ENCODE measurements at regions of chr4 and their contacts with region 1.

Region 1: DNA sequence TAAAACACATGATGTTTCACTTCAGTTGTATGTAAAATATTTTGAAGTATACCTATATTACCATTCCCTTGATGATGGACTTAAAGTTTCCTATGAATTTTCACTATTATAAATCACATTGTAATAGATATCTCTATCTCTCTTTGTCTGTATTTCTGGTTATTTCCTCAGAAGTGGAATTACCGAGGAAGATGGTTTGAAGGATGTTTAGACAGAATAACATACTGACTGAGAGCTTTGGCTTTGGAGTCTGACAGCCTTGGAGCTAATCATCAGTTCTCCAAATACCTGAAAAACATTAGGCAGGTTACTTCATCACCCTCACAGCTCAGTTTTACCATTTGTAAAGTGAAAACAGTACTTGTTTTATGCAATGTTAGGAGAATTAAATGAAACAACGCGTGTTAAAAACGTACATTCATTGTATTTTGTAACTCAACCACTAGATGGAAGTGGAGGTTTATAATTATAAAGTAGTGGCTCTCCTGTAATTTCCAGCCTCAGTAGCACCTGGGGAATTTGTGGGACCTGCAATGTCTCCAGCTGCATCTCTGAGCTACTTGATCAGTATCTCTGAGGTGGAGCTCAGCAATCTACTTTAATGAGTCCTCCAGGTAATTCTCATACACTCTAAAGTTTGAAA is 14.3 kb downstream of the JCHAIN start:
- DNase-seq: peak; percentile 11 to 37 (median 27)
- H3K4me3 ChIP-seq: no peak overlapping the region
- H3K4me3 Mint-ChIP-seq: no peak overlapping the region
- H3K27ac ChIP-seq: no peak overlapping the region
- H3K27ac Mint-ChIP-seq: no peak overlapping the region
- H3K4me1 ChIP-seq: no peaks in the 10 kb centered on the region
- H3K4me1 Mint-ChIP-seq: peaks cover 7% of the 10 kb centered on the region
- H3K27me3 ChIP-seq: no peaks in the 10 kb centered on the region
- H3K27me3 Mint-ChIP-seq: peaks cover 0 to 4% (median 0%) of the 10 kb centered on the region in 3 donors
- CTCF ChIP-seq: peak; percentile 73

Region 2: DNA sequence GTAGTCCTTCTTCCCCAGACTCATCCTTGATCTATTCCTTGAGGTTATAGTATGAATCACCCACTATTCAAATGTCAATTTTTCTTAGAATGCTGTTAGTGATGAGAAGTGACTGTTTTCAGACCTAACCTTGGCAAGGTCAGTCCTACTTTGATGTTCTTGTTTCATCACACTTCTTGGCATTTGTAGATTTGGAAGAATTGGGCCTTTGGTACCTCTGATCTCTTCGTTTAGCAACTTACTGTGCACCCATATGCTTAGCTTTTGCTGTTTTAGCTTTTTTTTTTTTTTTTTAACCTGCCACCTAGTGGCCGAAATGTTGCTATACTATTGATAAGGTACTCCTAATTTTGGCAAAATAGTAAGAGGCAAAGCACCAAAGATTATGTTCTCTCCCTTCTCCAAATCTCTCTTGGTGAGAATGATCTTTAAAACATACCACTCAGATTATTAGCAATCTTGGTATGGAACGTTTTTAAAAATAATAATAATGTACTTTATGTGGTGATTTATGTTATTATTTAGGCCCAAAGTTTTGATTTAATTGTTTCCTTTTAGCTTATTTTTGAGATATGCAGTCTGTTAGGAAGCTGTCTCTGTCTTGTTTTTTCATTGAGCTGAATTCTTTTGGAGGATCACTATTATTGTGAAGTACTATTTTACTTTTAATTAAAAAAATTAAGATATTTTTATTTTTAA is 358.1 kb after region 1 on chr4:
- intact Hi-C with region 1: loop called in 1 of 2 experiments (anchors 10 kb)
- DNase-seq: peak; percentile 25 to 42 (median 29)
- H3K4me3 ChIP-seq: no peak overlapping the region
- H3K4me3 Mint-ChIP-seq: no peak overlapping the region
- H3K27ac ChIP-seq: peak overlapping the region in 1 of 2 donors; percentile 16
- H3K27ac Mint-ChIP-seq: peak overlapping the region in 2 of 7 donors; percentile 25 to 28
- H3K4me1 ChIP-seq: peaks cover 10% of the 10 kb centered on the region in 2 donors
- H3K4me1 Mint-ChIP-seq: peaks cover 10% of the 10 kb centered on the region
- H3K27me3 ChIP-seq: no peaks in the 10 kb centered on the region
- H3K27me3 Mint-ChIP-seq: no peaks in the 10 kb centered on the region
- CTCF ChIP-seq: peak; percentile 82

Measured in CD14-positive monocyte (primary cell).